AG04449 (cell line): ENCODE measurements at regions of chr11 and their contacts with region 1.

Region 1: GRCh38 chr11:1640076-1640946 is 10.7 kb downstream of the KRTAP5-5 start:
- DNase-seq: no peak
- H3K4me3 ChIP-seq: no peak overlapping the region
- CTCF ChIP-seq: peak; percentile 87

Region 2: DNA sequence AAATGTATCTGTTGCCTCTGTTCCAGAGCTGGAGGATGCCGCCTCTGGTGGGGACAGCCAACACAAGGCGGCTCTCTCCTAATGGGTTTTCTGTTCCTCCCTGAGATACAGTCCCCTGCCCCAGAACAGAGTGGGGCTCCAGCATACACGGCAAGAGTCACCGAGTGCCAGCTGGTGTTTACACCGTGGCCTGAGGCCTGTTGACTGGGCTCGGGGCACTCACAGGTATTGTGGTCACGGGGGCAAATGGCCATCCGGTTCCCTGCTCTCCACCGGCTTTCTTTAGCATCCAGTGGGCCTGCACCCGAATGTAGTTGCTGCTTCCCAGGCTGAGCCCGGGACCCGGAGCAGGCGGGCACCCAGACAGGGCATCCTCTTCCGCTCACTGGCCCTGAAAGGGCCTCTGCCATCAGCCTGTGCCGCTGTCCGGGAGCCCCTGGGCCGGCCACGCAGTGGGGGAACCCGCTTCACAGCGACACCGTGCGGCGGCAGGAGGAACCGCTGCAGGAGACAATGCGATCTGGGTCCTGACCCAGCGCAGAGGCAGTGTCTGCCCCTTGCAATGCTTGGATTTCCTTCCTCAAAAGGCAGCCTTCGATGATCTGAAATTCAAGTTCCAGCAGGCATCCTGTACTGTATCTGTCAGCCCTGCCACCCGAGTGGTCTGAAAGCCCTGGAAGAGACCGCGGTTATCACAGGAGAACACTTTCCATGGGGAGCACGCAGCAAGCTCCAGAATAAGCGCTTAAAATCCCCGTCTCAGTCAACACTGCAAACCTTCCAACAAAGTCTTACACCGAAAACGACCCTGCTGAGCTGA is 11.6 kb before region 1 on chr11:
- CTCF ChIA-PET with region 1: interaction called, 45 read pairs
- POLR2A ChIA-PET with region 1: no interaction called
- DNase-seq: no peak
- H3K4me3 ChIP-seq: no peak overlapping the region
- CTCF ChIP-seq: peak; percentile 95

Region 3: DNA sequence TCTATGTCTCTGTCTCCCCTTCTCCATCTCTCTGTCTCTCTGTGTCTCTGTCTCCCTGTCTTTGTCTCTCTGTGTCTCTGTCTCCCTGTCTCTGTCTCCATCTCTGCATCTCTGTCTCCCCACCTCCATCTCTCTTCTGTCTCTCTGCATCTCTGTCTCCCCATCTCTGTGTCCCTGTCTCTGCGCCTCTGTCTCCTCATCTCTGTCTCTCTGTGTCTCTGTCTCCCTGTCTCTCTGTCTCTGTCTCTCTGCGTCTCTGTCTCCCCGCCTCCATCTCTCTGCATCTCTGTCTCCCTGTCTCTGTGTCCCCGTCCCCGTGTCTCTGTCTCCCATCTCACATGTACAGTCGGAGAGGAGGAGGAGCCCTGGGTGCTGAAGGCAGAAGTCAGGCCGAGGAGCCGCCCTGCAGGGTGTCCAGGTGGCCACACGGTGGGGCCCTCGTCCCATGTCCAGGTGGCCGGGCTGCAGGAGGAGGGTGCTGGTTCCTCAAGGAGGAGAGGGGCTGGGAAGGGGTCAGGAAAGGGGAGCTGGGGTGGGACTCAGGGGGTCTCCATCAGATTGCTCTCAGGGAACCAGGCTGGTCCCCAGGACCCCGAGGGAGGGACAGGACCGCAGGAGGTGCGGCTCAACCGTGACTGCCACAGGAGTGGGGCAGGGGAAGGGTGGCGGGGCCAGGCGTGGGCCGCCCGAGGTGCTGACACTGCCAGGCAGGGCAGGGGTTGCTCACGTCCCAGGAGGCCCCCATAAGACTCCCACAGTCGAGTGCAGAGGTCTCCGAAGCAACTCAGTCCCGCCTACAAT is 556.9 kb after region 1 on chr11:
- CTCF ChIA-PET with region 1: no interaction called
- POLR2A ChIA-PET with region 1: no interaction called
- DNase-seq: no peak
- H3K4me3 ChIP-seq: no peak overlapping the region
- CTCF ChIP-seq: peak; percentile 98